ENCODE measurements at regions of chr10 and their contacts with region 1.

Region 1: GRCh38 chr10:119090968-119091367 is 10.4 kb upstream of the EIF3A start:
- DNase-seq: peak; percentile 81 to 88 (median 84)
- H3K4me3 ChIP-seq: peak overlapping the region in 1 of 2 donors; percentile 36
- H3K4me3 Mint-ChIP-seq: peak overlapping the region; percentile 72 to 89 (median 82)
- H3K27ac ChIP-seq: peak overlapping the region; percentile 72
- H3K27ac Mint-ChIP-seq: peak overlapping the region; percentile 91 to 100 (median 100)
- H3K4me1 ChIP-seq: peaks cover 67% of the 10 kb centered on the region
- H3K4me1 Mint-ChIP-seq: peaks cover 39 to 73% (median 55%) of the 10 kb centered on the region in 4 donors
- H3K27me3 ChIP-seq: no peaks in the 10 kb centered on the region
- H3K27me3 Mint-ChIP-seq: no peaks in the 10 kb centered on the region

Region 2: GRCh38 chr10:119070395-119071165 is 20.4 kb before region 1 on chr10:
- CTCF ChIA-PET with region 1: interaction called, 5 read pairs
- POLR2A ChIA-PET with region 1: interaction called, 18 read pairs
- intact Hi-C with region 1: no loop called
- DNase-seq: no peak
- H3K4me3 ChIP-seq: no peak overlapping the region
- H3K4me3 Mint-ChIP-seq: no peak overlapping the region
- H3K27ac ChIP-seq: no peak overlapping the region
- H3K27ac Mint-ChIP-seq: peak overlapping the region in 4 of 7 donors; percentile 15 to 59 (median 46)
- H3K4me1 ChIP-seq: peaks cover 31% of the 10 kb centered on the region
- H3K4me1 Mint-ChIP-seq: peaks cover 24 to 46% (median 36%) of the 10 kb centered on the region in 4 donors
- H3K27me3 ChIP-seq: no peaks in the 10 kb centered on the region
- H3K27me3 Mint-ChIP-seq: no peaks in the 10 kb centered on the region

Region 3: DNA sequence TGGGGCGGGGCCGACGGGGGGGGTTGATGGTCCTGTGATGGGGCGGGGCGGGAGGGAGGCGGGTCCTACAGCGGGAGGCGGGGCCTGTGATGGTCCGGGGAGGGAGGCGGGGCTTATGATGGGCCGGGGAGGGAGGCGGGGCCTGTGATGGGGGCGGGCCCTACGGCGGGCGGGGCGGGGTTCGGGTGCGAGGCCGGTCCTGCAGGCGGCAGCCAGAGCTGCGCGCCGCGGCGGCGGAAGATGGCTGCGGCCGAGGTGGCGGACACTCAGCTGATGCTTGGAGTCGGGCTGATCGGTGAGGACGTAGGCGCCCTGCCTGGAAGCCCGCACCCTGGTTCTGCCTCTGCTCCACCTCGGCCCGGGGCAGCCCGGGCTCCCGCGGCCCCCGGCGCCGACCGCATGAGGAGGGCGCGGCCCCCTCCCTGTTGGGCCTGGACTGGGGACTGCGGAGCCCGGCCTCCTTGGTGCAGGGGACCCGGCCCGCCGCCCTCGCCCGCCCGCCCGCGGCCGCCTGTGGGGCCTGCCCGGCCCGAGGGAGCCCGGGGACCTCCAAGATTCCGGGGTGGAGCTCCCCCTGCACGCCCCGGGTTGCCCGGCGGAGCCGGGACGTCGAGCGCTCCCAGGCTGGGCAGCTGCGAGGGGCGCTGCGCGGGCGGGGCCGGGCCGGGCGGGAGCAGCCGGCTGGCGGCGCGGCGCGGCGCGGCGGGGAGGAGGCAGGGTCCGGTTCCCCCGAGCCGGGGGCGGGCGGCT is 13.1 kb after region 1 on chr10 and contains the start of gene DENND10:
- CTCF ChIA-PET with region 1: interaction called, 11 read pairs
- POLR2A ChIA-PET with region 1: interaction called, 169 read pairs
- intact Hi-C with region 1: loop called (anchors 1 kb)
- DNase-seq: peak; percentile 56 to 71 (median 60)
- H3K4me3 ChIP-seq: peak within 1 kb of the TSS; percentile 52 to 59
- H3K4me3 Mint-ChIP-seq: peak within 1 kb of the TSS; percentile 79 to 88 (median 86)
- H3K27ac ChIP-seq: peak within 1 kb of the TSS; percentile 54
- H3K27ac Mint-ChIP-seq: peak within 1 kb of the TSS; percentile 72 to 95 (median 91)
- H3K4me1 ChIP-seq: peaks cover 34% of the 10 kb centered on the region
- H3K4me1 Mint-ChIP-seq: peaks cover 14 to 46% (median 34%) of the 10 kb centered on the region in 4 donors
- H3K27me3 ChIP-seq: no peaks in the 10 kb centered on the region
- H3K27me3 Mint-ChIP-seq: no peaks in the 10 kb centered on the region
- total RNA-seq, gene DENND10: 48.0 to 53.4 TPM

Region 4: DNA sequence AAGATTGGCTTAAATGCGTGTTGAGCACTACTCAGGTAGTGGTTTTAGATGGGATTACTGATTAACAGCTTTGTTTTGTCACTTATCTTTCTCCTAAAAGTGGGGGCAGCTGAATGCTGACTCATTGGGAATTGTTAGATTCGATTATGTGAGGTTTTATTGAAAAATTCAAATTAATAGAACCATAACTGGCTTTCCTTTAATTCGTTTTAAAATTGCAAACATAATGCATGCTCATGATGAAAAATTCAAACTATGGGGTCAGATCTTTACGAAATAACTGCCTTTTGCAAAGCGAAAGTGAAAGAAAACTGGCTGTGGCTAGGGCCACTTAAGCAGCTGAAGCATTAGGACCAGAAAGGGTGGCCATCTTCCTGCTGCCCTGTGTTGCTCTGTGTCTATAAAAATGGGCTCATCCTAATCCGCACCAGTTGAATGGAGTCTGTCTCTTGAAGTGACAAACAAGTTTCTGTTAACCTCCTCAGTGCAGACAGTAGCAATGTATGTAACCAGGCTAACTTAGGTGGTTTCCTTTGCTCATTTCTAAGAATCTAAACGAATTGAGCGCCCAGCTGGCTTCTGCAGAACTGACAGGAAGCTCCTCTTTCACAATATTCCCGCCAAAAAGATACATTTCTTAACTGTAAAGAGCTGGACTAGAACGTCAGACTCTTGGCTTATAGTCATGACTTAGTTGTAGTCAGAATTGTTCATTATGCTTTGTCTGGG is 40.7 kb after region 1 on chr10:
- CTCF ChIA-PET with region 1: no interaction called
- POLR2A ChIA-PET with region 1: interaction called, 18 read pairs
- intact Hi-C with region 1: no loop called
- DNase-seq: peak; percentile 42 to 57 (median 50)
- H3K4me3 ChIP-seq: peak overlapping the region; percentile 3 to 44
- H3K4me3 Mint-ChIP-seq: peak overlapping the region; percentile 87 to 96 (median 92)
- H3K27ac ChIP-seq: peak overlapping the region; percentile 65
- H3K27ac Mint-ChIP-seq: peak overlapping the region; percentile 86 to 99 (median 95)
- H3K4me1 ChIP-seq: peaks cover 40% of the 10 kb centered on the region
- H3K4me1 Mint-ChIP-seq: peaks cover 31 to 49% (median 38%) of the 10 kb centered on the region in 4 donors
- H3K27me3 ChIP-seq: no peaks in the 10 kb centered on the region
- H3K27me3 Mint-ChIP-seq: no peaks in the 10 kb centered on the region

Region 5: DNA sequence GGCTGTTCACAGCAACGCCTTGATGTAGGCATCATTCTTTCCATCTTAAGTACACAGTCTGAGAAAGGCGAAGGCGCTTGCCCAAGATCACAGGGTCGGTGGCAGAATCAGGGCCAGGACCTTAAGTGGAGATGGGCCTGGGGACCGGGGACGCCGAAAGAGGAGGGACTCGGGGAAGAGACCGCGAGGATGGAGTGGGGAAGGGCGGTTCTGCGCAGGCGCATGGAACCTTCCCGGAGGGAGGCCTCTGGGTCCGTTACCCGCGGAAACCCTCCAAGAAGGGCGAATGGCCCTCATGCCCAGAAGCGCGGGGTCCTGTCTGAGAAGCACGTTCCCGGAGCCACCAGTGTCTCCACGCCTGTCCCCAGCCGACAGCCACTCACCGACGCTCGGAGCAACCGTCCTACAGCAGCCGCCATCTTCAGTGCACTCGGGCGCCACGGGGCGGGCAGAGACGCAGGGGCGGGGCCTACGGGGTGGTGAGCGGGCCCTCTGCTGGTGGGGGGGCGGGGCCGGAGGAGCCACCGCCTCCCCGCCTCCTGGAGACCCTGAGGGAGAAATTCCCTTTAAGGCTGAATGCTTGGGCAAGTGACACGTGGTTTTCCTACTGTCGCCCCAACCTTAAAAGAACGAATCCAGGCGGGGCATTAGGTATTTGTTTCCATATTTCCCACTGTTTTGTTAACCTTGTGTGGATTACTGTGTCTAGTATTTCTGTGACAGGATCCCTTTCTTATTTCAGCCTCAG is 87.6 kb after region 1 on chr10 and contains the start of gene PRDX3:
- CTCF ChIA-PET with region 1: no interaction called
- POLR2A ChIA-PET with region 1: interaction called, 5 read pairs
- intact Hi-C with region 1: loop called (anchors 2 kb)
- DNase-seq: peak; percentile 89 to 92 (median 89)
- H3K4me3 ChIP-seq: peak within 1 kb of the TSS; percentile 96 to 100
- H3K4me3 Mint-ChIP-seq: peak within 1 kb of the TSS; percentile 89 to 99 (median 96)
- H3K27ac ChIP-seq: peak within 1 kb of the TSS; percentile 81
- H3K27ac Mint-ChIP-seq: peak within 1 kb of the TSS; percentile 85 to 98 (median 96)
- H3K4me1 ChIP-seq: peaks cover 44% of the 10 kb centered on the region
- H3K4me1 Mint-ChIP-seq: peaks cover 16 to 51% (median 34%) of the 10 kb centered on the region in 4 donors
- H3K27me3 ChIP-seq: no peaks in the 10 kb centered on the region
- H3K27me3 Mint-ChIP-seq: no peaks in the 10 kb centered on the region
- total RNA-seq, gene PRDX3: 34.3 to 38.2 TPM